B cell (primary cell): ENCODE measurements at regions of chr4 and their contacts with region 1.

Region 1: DNA sequence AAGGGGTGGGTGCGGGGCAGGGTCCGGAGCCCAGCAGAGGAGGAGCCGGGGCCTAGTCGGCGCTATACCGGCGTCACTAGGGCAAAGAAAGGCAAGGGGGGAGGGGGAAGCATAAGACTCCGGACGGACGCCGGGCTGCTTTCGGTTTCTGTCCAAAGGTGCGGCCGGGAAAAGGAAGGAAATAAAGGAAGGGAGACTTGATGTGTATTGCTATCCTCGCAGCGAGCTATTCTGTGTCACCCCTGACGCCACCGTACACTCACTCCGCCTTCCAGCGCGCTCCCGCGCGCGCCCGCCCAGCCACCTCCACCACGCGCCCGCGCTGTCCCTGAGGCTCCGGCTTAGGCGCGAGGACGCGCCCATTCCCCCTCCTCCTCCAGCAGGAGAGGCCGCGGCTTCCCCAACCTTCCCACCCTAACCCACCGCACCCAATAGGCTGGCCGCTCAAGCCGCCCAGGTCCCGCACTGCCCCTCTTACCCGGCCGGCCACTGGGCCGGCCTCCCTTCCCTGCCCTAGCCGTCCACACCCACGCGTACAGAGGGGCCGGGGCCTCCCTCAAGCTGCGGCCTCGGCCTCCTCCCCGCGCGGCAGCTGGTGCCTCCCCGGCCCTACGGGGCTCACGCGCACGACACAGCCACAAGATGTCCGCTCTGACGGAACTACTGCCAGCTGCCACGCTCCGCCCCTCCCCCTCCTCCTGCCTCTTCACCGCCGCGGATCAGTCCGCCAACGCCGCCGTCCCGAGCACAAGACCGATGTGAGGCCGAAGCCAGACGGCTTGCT is at the start of gene UBE2D3:
- DNase-seq: peak; percentile 99
- ATAC-seq: peak; percentile 48
- H3K4me3 ChIP-seq: peak within 1 kb of the TSS; percentile 96 to 100 (median 98)
- H3K4me3 Mint-ChIP-seq: no peak within 1 kb of the TSS
- H3K27ac ChIP-seq: peak within 1 kb of the TSS; percentile 100
- H3K27ac Mint-ChIP-seq: no peak within 1 kb of the TSS
- H3K4me1 ChIP-seq: peaks cover 33 to 34% of the 10 kb centered on the region in 2 donors
- H3K4me1 Mint-ChIP-seq: peaks cover 38% of the 10 kb centered on the region
- H3K27me3 ChIP-seq: no peaks in the 10 kb centered on the region
- H3K27me3 Mint-ChIP-seq: no peaks in the 10 kb centered on the region
- CTCF ChIP-seq: no peak
- total RNA-seq, gene UBE2D3: 261 and 264 TPM in 2 replicates

Region 2: DNA sequence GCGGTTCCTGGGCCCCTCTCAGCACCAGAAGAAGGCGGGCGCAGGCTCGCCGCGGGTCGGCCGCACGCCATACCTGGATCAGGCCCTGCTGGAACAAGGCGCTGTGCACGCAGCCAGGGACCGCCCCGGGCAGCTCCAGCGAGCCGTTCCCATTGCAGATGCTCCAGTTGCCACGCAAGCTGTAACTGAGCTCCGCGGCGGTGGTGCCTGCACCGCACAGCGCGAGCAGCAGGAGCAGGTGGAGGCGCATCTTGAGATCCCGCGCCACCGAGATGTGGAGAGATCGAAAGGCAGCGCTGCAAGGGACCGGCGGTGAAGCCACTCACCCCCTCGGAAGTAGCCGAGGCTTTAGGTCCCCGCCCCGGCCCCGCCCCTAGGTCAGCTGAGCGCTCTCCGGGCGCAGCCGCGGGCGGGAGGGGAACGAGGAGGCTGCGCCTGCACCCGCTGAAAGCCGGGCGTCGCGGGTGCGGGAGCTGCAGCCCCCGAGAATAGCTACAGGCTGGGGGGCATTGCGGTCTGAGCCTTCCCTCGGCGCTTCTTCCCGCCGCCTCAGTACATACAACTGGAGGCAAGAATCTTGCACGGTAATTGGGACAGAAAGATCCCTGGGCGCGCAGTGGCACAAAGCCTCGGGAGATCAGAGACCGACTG is 66.3 kb before region 1 on chr4 and contains the start of gene MANBA:
- CTCF ChIA-PET with region 1: interaction called, 13 read pairs
- POLR2A ChIA-PET with region 1: interaction called, 74 read pairs
- intact Hi-C with region 1: loop called (anchors 1 kb)
- DNase-seq: peak; percentile 93
- ATAC-seq: peak; percentile 75
- H3K4me3 ChIP-seq: peak within 1 kb of the TSS; percentile 69 to 99 (median 87)
- H3K4me3 Mint-ChIP-seq: peak within 1 kb of the TSS; percentile 96
- H3K27ac ChIP-seq: peak within 1 kb of the TSS; percentile 98
- H3K27ac Mint-ChIP-seq: peak within 1 kb of the TSS; percentile 97
- H3K4me1 ChIP-seq: peaks cover 29 to 35% of the 10 kb centered on the region in 2 donors
- H3K4me1 Mint-ChIP-seq: peaks cover 51% of the 10 kb centered on the region
- H3K27me3 ChIP-seq: no peaks in the 10 kb centered on the region
- H3K27me3 Mint-ChIP-seq: no peaks in the 10 kb centered on the region
- CTCF ChIP-seq: no peak
- total RNA-seq, gene MANBA: 119 and 132 TPM in 2 replicates

Region 3: GRCh38 chr4:102809190-102809589 is 17.9 kb before region 1 on chr4:
- CTCF ChIA-PET with region 1: interaction called, 5 read pairs
- POLR2A ChIA-PET with region 1: no interaction called
- intact Hi-C with region 1: loop called (anchors 2 kb)
- DNase-seq: peak; percentile 45
- ATAC-seq: peak; percentile 36
- H3K4me3 ChIP-seq: no peak overlapping the region
- H3K4me3 Mint-ChIP-seq: no peak overlapping the region
- H3K27ac ChIP-seq: peak overlapping the region; percentile 9 to 44
- H3K27ac Mint-ChIP-seq: peak overlapping the region; percentile 18
- H3K4me1 ChIP-seq: peaks cover 22 to 24% of the 10 kb centered on the region in 2 donors
- H3K4me1 Mint-ChIP-seq: peaks cover 43% of the 10 kb centered on the region
- H3K27me3 ChIP-seq: no peaks in the 10 kb centered on the region
- H3K27me3 Mint-ChIP-seq: no peaks in the 10 kb centered on the region
- CTCF ChIP-seq: no peak

Region 4: GRCh38 chr4:103019308-103020124 is 192.4 kb after region 1 on chr4 and contains the start of gene SLC9B1:
- CTCF ChIA-PET with region 1: no interaction called
- POLR2A ChIA-PET with region 1: interaction called, 5 read pairs
- intact Hi-C with region 1: loop called (anchors 1 kb)
- DNase-seq: peak; percentile 94
- ATAC-seq: peak; percentile 98
- H3K4me3 ChIP-seq: peak within 1 kb of the TSS; percentile 65 to 92 (median 82)
- H3K4me3 Mint-ChIP-seq: peak within 1 kb of the TSS; percentile 96
- H3K27ac ChIP-seq: peak within 1 kb of the TSS; percentile 94 to 98
- H3K27ac Mint-ChIP-seq: peak within 1 kb of the TSS; percentile 95
- H3K4me1 ChIP-seq: peaks cover 17 to 21% of the 10 kb centered on the region in 2 donors
- H3K4me1 Mint-ChIP-seq: peaks cover 27% of the 10 kb centered on the region
- H3K27me3 ChIP-seq: no peaks in the 10 kb centered on the region
- H3K27me3 Mint-ChIP-seq: no peaks in the 10 kb centered on the region
- CTCF ChIP-seq: no peak
- total RNA-seq, gene SLC9B1: 1.9 and 2.1 TPM in 2 replicates